ENCODE measurements at regions of chr3 and their contacts with region 1.

Region 1: DNA sequence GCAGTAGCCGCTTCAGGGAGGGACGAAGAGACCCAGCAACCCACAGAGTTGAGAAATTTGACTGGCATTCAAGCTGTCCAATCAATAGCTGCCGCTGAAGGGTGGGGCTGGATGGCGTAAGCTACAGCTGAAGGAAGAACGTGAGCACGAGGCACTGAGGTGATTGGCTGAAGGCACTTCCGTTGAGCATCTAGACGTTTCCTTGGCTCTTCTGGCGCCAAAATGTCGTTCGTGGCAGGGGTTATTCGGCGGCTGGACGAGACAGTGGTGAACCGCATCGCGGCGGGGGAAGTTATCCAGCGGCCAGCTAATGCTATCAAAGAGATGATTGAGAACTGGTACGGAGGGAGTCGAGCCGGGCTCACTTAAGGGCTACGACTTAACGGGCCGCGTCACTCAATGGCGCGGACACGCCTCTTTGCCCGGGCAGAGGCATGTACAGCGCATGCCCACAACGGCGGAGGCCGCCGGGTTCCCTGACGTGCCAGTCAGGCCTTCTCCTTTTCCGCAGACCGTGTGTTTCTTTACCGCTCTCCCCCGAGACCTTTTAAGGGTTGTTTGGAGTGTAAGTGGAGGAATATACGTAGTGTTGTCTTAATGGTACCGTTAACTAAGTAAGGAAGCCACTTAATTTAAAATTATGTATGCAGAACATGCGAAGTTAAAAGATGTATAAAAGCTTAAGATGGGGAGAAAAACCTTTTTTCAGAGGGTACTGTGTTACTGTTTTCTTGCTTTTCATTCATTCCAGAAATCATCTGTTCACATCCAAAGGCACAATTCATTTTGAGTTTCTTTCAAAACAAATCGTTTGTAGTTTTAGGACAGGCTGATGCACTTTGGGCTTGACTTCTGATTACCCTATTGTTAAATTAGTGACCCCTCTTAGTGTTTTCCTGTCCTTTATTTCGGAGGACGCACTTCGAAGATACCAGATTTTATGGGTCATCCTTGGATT is at the start of gene MLH1:
- DNase-seq: peak; percentile 99
- H3K4me3 Mint-ChIP-seq: no peak within 1 kb of the TSS
- H3K27ac Mint-ChIP-seq: no peak within 1 kb of the TSS
- H3K4me1 Mint-ChIP-seq: peaks cover 38% of the 10 kb centered on the region
- H3K27me3 Mint-ChIP-seq: no peaks in the 10 kb centered on the region
- total RNA-seq, gene MLH1: 63.4 and 65.0 TPM in 2 replicates

Region 2: GRCh38 chr3:36876181-36876936 is 117.2 kb before region 1 on chr3:
- intact Hi-C with region 1: loop called (anchors 1 kb)
- DNase-seq: peak; percentile 20
- H3K4me3 Mint-ChIP-seq: peak overlapping the region; percentile 55
- H3K27ac Mint-ChIP-seq: peak overlapping the region; percentile 69
- H3K4me1 Mint-ChIP-seq: peaks cover 25% of the 10 kb centered on the region
- H3K27me3 Mint-ChIP-seq: peaks cover 18% of the 10 kb centered on the region

Region 3: DNA sequence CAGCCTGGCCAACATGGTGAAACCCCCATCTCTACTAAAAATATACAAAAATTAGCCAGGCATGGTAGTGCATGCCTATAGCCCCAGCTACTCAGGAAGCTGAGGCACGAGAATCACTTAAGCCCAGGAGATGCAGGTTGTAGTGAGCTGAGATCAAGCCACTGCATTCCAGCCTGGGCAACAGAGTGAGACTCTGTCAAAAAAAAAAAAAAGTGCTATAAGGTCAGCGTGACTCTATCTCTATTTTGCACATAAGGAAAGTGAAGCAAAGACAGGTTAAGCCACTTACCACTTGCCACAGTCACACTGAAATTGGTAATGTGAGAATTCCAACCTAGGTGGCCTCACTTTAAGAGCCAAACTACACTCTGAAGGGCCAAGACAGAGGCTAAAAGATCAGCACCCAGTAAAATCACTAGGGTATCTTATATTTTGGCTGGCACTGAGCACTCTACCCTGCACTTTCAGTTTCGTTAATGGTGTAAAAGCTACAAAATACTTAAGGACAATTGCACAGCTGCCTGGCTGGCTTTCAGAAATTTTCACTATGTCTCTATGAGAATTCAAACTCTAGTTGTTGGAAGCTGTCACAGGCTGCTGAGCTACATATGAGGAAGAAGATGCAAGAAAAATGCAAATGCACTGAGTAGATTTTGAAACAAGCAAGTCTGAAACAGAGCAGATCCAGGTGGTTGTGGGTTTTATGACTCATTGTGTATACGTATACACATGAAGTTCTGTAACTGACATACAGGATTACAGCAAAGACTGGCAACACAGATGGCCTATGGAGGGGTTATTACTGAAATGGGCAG is 81.4 kb before region 1 on chr3:
- intact Hi-C with region 1: loop called (anchors 1 kb)
- DNase-seq: peak; percentile 40
- H3K4me3 Mint-ChIP-seq: peak overlapping the region; percentile 19
- H3K27ac Mint-ChIP-seq: peak overlapping the region; percentile 41
- H3K4me1 Mint-ChIP-seq: peaks cover 40% of the 10 kb centered on the region
- H3K27me3 Mint-ChIP-seq: no peaks in the 10 kb centered on the region

Region 4: GRCh38 chr3:36944012-36944640 is 49.5 kb before region 1 on chr3:
- intact Hi-C with region 1: loop called (anchors 1 kb)
- DNase-seq: no peak
- H3K4me3 Mint-ChIP-seq: peak overlapping the region; percentile 69
- H3K27ac Mint-ChIP-seq: no peak overlapping the region
- H3K4me1 Mint-ChIP-seq: no peaks in the 10 kb centered on the region
- H3K27me3 Mint-ChIP-seq: peaks cover 16% of the 10 kb centered on the region

Region 5: DNA sequence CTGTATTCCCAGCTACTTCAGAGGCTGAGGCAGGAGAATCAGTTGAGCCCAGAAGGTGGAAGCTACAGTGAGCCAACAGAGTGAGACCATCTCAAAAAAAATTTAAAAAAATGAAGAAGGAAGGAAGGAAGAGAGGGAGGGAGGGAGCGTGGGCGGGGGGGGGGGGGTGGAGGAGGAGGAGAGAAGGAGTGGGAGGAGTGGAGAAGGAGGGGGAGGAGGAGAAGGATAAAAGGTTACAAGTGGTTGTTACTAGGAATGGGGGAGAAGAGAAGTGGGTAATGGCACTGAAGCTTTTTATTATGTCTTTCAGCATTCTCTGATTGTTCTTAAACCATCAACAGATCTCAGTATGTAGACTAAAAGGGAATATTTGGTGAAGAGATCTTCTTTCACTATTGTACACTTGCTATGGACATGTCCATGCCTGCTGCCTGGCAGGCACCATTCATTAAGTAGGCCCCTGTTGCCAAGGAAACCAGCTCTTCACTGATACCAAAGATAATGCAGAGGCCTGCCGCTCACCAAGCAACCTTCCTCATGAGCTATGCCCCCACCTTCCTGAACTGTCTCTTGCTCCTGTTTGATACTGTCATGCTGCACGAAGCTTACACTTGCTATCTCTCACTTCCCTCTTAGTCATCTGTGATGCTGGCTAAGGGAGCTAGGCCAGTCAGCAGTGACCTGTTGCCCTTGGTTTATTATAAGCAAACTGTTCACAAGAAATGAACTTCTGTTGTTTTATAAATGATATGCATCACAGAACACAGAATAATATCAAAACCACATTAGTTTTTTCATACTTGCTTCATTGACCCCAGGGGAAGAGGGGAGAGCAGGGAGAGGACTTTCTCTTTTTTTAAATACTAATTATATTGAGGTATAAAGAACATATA is 23.8 kb before region 1 on chr3:
- intact Hi-C with region 1: loop called (anchors 2 kb)
- DNase-seq: no peak
- H3K4me3 Mint-ChIP-seq: no peak overlapping the region
- H3K27ac Mint-ChIP-seq: peak overlapping the region; percentile 41
- H3K4me1 Mint-ChIP-seq: peaks cover 36% of the 10 kb centered on the region
- H3K27me3 Mint-ChIP-seq: no peaks in the 10 kb centered on the region

Region 6: DNA sequence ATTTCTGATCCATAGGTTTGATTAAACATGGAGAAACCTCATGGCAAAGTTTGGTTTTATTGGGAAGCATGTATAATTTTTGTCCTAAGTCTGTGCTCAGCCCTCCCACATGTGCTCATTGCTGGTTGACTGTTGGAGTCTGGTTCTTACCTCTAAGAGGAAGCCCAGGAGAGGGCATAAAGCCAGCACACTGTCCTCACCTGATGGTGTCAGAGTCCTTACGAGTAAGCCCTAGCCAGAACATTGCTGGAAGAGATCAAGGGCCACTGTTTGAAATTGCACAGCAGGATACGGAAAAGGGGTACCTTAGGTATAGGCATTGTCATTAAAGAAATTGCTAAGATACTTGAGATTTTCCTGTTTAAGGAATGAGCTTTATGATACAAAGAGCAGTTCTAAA is 21.0 kb after region 1 on chr3:
- intact Hi-C with region 1: no loop called
- DNase-seq: no peak
- H3K4me3 Mint-ChIP-seq: no peak overlapping the region
- H3K27ac Mint-ChIP-seq: no peak overlapping the region
- H3K4me1 Mint-ChIP-seq: no peaks in the 10 kb centered on the region
- H3K27me3 Mint-ChIP-seq: no peaks in the 10 kb centered on the region

Region 7: DNA sequence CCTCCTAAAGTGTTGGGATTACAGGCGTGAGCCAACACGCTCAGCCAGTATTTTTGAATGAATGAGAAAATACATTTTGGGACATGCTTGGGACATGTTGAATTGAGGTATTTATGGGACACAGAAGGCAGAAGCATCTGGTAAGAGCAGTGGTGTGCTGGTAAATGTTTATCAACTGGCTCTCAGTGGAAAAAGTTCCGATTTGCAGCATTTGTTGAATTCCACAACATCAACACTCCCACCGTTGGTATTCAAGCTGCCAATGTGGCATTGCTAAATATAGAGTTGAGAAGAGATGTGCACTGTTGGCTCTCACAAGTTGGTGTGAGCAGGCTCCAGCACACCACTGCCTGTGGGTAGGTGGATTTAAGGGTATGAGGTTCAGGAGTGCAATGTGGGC is 216.6 kb after region 1 on chr3:
- intact Hi-C with region 1: loop called (anchors 1 kb)
- DNase-seq: no peak
- H3K4me3 Mint-ChIP-seq: no peak overlapping the region
- H3K27ac Mint-ChIP-seq: no peak overlapping the region
- H3K4me1 Mint-ChIP-seq: peaks cover 5% of the 10 kb centered on the region
- H3K27me3 Mint-ChIP-seq: peaks cover 2% of the 10 kb centered on the region

Region 8: GRCh38 chr3:37243820-37244748 is 250.5 kb after region 1 on chr3:
- intact Hi-C with region 1: no loop called
- DNase-seq: peak; percentile 24
- H3K4me3 Mint-ChIP-seq: peak overlapping the region; percentile 95
- H3K27ac Mint-ChIP-seq: peak overlapping the region; percentile 98
- H3K4me1 Mint-ChIP-seq: peaks cover 44% of the 10 kb centered on the region
- H3K27me3 Mint-ChIP-seq: no peaks in the 10 kb centered on the region

Measured in activated T-helper 1 cell treated with anti-CD3 and anti-CD28 coated beads, Interleukin-12 subunit alpha, Interleukin-12 subunit beta, Interleukin-2, Interleukin-4 antibody, amounts not matched to agents 30 ng/mL and 10 ng/mL and 1 ng/mL, durations not matched to agents 14 hours and 24 hours and 36 hours (primary cell).